T-cell (primary cell): ENCODE measurements at regions of chr17 and their contacts with region 1.

Region 1: DNA sequence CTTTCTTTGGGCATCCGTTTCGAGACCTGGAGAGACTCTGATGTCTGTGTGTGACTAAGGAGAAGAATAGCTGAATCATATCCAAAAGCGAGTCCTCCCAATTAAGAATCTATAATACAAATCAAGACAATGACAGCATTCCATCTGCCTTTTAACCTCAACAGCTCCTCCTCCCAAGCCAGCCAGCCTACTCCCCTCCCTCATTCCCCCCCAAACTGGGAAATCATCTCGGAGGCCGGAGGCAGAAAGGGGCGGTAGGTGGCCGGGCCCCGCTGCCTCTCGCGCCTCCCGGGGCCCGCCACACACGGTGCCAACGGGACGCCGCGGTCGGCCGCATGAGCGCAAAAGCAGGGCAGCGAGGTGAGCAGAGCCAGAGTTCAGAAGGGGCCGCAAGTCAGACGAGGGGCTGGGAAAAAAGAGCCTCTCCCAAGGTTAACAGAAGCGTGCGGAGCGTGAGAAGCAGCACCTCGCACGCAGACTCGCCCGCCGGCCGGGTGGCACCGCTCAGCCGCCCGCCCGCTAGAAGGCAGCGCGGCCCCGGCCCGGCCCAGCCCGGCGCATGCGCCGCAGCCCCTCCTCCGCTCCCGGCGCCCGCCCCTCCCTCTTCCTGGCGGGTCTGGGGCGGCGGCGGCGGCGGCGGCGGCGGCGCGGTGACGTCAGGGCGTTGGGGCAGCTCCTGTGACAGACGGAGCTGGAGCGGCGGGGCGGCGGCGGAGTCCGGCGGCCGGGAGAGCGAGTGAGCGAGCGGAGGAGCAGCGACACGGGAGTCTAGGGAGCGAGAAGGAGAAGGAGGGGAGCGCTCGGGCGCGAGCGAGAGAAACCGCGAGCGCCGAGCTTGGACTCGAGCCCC is at the start of gene PAFAH1B1:
- DNase-seq: peak; percentile 86 to 98 (median 93)
- ATAC-seq: peak; percentile 81 to 84 (median 84)
- H3K4me3 ChIP-seq: peak within 1 kb of the TSS; percentile 77 to 97
- H3K4me3 Mint-ChIP-seq: peak within 1 kb of the TSS; percentile 84 to 97 (median 95)
- H3K27ac ChIP-seq: peak within 1 kb of the TSS; percentile 94
- H3K27ac Mint-ChIP-seq: peak within 1 kb of the TSS; percentile 90 to 93
- H3K4me1 ChIP-seq: peaks cover 24 to 28% of the 10 kb centered on the region in 2 experiments
- H3K4me1 Mint-ChIP-seq: peaks cover 31 to 35% (median 34%) of the 10 kb centered on the region in 3 donors
- H3K27me3 ChIP-seq: no peaks in the 10 kb centered on the region
- H3K27me3 Mint-ChIP-seq: no peaks in the 10 kb centered on the region
- total RNA-seq, gene PAFAH1B1: 113 to 133 (median 122) TPM

Region 2: GRCh38 chr17:2521257-2521656 is 71.9 kb before region 1 on chr17:
- CTCF ChIA-PET with region 1: no interaction called
- POLR2A ChIA-PET with region 1: no interaction called
- DNase-seq: no peak
- ATAC-seq: no peak
- H3K4me3 ChIP-seq: no peak overlapping the region
- H3K4me3 Mint-ChIP-seq: no peak overlapping the region
- H3K27ac ChIP-seq: no peak overlapping the region
- H3K27ac Mint-ChIP-seq: no peak overlapping the region
- H3K4me1 ChIP-seq: no peaks in the 10 kb centered on the region
- H3K4me1 Mint-ChIP-seq: no peaks in the 10 kb centered on the region
- H3K27me3 ChIP-seq: no peaks in the 10 kb centered on the region
- H3K27me3 Mint-ChIP-seq: no peaks in the 10 kb centered on the region

Region 3: GRCh38 chr17:2580661-2581060 is 12.5 kb before region 1 on chr17:
- CTCF ChIA-PET with region 1: no interaction called
- POLR2A ChIA-PET with region 1: interaction called in 1 of 2 experiments, 12 read pairs
- DNase-seq: no peak
- ATAC-seq: no peak
- H3K4me3 ChIP-seq: no peak overlapping the region
- H3K4me3 Mint-ChIP-seq: no peak overlapping the region
- H3K27ac ChIP-seq: no peak overlapping the region
- H3K27ac Mint-ChIP-seq: no peak overlapping the region
- H3K4me1 ChIP-seq: no peaks in the 10 kb centered on the region
- H3K4me1 Mint-ChIP-seq: no peaks in the 10 kb centered on the region
- H3K27me3 ChIP-seq: peaks cover 0 to 10% of the 10 kb centered on the region in 2 experiments
- H3K27me3 Mint-ChIP-seq: peaks cover 0 to 14% of the 10 kb centered on the region in 2 donors

Region 4: GRCh38 chr17:2892305-2892971 is 299.2 kb after region 1 on chr17:
- CTCF ChIA-PET with region 1: no interaction called
- POLR2A ChIA-PET with region 1: no interaction called
- DNase-seq: no peak
- ATAC-seq: no peak
- H3K4me3 ChIP-seq: no peak overlapping the region
- H3K4me3 Mint-ChIP-seq: no peak overlapping the region
- H3K27ac ChIP-seq: no peak overlapping the region
- H3K27ac Mint-ChIP-seq: no peak overlapping the region
- H3K4me1 ChIP-seq: peaks cover 0 to 18% of the 10 kb centered on the region in 2 experiments
- H3K4me1 Mint-ChIP-seq: peaks cover 4 to 22% (median 19%) of the 10 kb centered on the region in 3 donors
- H3K27me3 ChIP-seq: no peaks in the 10 kb centered on the region
- H3K27me3 Mint-ChIP-seq: no peaks in the 10 kb centered on the region